ENCODE measurements at regions of chr10 and their contacts with region 1.

Region 1: GRCh38 chr10:102009801-102010425 is 46.1 kb downstream of the ARMH3 start:
- DNase-seq: no peak
- ATAC-seq: peak; percentile 92
- H3K4me3 Mint-ChIP-seq: no peak overlapping the region
- H3K27ac Mint-ChIP-seq: peak overlapping the region; percentile 72
- H3K4me1 Mint-ChIP-seq: peaks cover 58% of the 10 kb centered on the region
- H3K27me3 Mint-ChIP-seq: no peaks in the 10 kb centered on the region
- CTCF ChIP-seq: no peak

Region 2: GRCh38 chr10:100982951-100983830 is 1026.7 kb before region 1 on chr10:
- CTCF ChIA-PET with region 1: no interaction called
- POLR2A ChIA-PET with region 1: no interaction called
- intact Hi-C with region 1: no loop called
- DNase-seq: no peak
- ATAC-seq: no peak
- H3K4me3 Mint-ChIP-seq: no peak overlapping the region
- H3K27ac Mint-ChIP-seq: no peak overlapping the region
- H3K4me1 Mint-ChIP-seq: peaks cover 29% of the 10 kb centered on the region
- H3K27me3 Mint-ChIP-seq: no peaks in the 10 kb centered on the region
- CTCF ChIP-seq: no peak

Region 3: GRCh38 chr10:101889256-101890210 is 120.4 kb before region 1 on chr10:
- CTCF ChIA-PET with region 1: interaction called, 338 read pairs
- POLR2A ChIA-PET with region 1: interaction called, 64 read pairs
- intact Hi-C with region 1: loop called (anchors 1 kb)
- DNase-seq: peak; percentile 62
- ATAC-seq: peak; percentile 96
- H3K4me3 Mint-ChIP-seq: no peak overlapping the region
- H3K27ac Mint-ChIP-seq: peak overlapping the region; percentile 79
- H3K4me1 Mint-ChIP-seq: peaks cover 41% of the 10 kb centered on the region
- H3K27me3 Mint-ChIP-seq: no peaks in the 10 kb centered on the region
- CTCF ChIP-seq: peak; percentile 62

Region 4: GRCh38 chr10:101903827-101904550 is 105.9 kb before region 1 on chr10:
- CTCF ChIA-PET with region 1: interaction called, 65 read pairs
- POLR2A ChIA-PET with region 1: interaction called, 15 read pairs
- intact Hi-C with region 1: loop called (anchors 2 kb)
- DNase-seq: peak; percentile 53
- ATAC-seq: peak; percentile 79
- H3K4me3 Mint-ChIP-seq: peak overlapping the region; percentile 57
- H3K27ac Mint-ChIP-seq: peak overlapping the region; percentile 95
- H3K4me1 Mint-ChIP-seq: peaks cover 85% of the 10 kb centered on the region
- H3K27me3 Mint-ChIP-seq: no peaks in the 10 kb centered on the region
- CTCF ChIP-seq: no peak

Region 5: DNA sequence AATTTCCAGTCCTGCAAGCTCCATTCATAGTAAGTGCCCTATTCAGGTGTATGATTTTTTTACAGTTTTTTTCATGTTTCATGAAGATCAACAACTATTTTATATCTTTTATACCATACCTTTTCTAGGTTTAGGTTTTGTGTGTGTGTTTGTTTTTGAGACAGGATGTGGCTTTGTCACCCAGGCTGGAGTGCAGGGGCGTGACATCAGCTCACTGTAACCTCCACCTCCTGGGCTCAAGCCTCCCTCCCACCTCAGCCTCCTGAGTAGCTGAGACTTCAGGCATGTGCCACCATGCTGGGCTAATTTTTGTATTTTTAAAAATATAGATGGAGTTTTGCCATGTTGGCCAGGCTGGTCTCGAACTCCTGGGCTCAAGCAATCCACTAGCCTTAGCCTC is 11.0 kb after region 1 on chr10:
- CTCF ChIA-PET with region 1: interaction called, 13 read pairs
- POLR2A ChIA-PET with region 1: no interaction called
- intact Hi-C with region 1: no loop called
- DNase-seq: no peak
- ATAC-seq: no peak
- H3K4me3 Mint-ChIP-seq: no peak overlapping the region
- H3K27ac Mint-ChIP-seq: no peak overlapping the region
- H3K4me1 Mint-ChIP-seq: no peaks in the 10 kb centered on the region
- H3K27me3 Mint-ChIP-seq: no peaks in the 10 kb centered on the region
- CTCF ChIP-seq: no peak

Region 6: DNA sequence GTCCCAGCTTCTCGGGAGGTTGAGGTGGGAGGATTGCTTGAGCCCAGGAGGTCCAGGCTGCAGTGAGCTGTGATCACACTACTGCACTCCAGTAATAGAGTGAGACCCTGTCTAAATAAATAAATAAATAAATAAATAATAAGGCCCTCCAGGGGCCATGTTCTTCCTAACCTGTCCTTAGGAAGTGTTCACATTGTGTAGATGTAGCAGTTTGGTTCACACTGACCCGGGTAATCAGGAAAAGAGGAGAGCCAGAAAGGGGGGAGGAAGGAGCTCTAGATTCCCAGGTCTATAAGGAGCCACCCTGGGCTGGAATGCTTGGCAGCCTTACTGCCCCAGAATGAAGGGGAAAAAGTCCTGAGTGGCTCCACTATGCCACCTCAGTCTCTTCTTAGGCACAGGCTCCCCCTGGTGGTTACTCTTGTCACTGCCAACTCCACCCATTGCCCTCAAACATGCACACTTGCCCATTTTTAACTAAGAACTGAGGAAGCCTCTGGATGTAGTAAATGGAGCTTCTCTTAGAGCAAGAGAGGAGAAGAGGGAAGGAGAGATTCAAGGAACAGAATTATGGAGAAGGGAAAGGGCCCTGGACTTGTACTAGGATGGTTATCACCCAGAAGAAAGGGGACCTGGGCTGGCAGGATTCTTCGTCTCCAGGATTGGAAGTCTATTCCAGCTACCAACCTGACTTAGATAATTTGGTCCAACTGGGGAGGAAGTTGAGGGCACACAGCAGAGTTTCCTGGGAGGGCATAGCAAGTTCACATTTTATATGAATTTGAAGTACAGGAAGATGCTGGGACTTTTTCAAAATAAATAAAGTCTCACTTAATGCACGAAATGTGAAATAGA is 63.0 kb after region 1 on chr10:
- CTCF ChIA-PET with region 1: interaction called, 17 read pairs
- POLR2A ChIA-PET with region 1: interaction called, 3 read pairs
- intact Hi-C with region 1: loop called (anchors 1 kb)
- DNase-seq: peak; percentile 65
- ATAC-seq: peak; percentile 95
- H3K4me3 Mint-ChIP-seq: no peak overlapping the region
- H3K27ac Mint-ChIP-seq: no peak overlapping the region
- H3K4me1 Mint-ChIP-seq: no peaks in the 10 kb centered on the region
- H3K27me3 Mint-ChIP-seq: no peaks in the 10 kb centered on the region
- CTCF ChIP-seq: peak; percentile 73

Region 7: DNA sequence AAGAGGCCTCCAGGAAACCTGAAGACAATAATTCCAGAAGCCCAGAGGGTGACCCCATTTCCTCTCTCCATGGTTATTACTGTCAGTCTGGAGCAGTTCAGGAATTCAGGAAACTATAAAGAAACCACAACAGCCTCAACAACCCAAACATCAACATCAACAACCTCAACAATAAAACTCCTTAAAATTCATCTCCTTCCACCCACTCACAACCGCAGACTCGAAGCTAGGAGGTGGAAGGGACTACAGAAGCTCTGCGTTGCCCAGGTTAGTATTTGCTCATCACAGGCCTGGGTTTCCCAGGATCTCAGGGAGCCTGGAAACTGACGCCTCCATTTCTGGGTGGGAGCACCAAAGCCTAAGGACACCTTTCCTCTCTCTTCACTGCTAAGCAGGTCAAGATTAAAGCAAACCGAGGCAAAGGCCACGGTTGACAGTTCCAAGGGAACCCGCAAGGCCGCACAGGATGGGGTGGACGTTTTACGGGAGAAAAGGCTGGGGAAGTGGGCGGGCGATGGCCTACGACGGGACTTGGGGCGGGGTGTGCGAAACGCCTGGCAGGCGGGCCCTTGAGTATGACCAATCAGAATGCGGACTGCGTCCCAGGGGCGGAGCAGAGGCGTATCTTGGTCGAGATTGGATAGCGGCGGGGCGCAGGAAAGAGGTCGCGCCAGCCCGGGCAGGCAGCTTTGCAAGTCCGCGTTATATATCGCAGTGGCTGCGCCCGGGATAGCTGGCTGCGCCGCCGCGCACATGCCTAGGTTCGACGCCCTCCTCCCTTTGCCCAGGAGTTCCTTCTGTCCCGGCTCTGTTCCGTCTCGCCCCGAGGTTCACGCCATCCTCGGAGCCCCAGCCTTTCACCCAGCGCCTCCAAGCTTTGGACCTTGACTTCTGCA is 216.0 kb after region 1 on chr10 and contains the start of gene ELOVL3:
- CTCF ChIA-PET with region 1: no interaction called
- POLR2A ChIA-PET with region 1: no interaction called
- intact Hi-C with region 1: no loop called
- DNase-seq: peak; percentile 69
- ATAC-seq: peak; percentile 94
- H3K4me3 Mint-ChIP-seq: peak within 1 kb of the TSS; percentile 71
- H3K27ac Mint-ChIP-seq: no peak within 1 kb of the TSS
- H3K4me1 Mint-ChIP-seq: peaks cover 19% of the 10 kb centered on the region
- H3K27me3 Mint-ChIP-seq: peaks cover 59% of the 10 kb centered on the region
- CTCF ChIP-seq: no peak
- total RNA-seq, gene ELOVL3: not detected in 2 replicates